ENCODE measurements at regions of chr17 and their contacts with region 1.

Region 1: DNA sequence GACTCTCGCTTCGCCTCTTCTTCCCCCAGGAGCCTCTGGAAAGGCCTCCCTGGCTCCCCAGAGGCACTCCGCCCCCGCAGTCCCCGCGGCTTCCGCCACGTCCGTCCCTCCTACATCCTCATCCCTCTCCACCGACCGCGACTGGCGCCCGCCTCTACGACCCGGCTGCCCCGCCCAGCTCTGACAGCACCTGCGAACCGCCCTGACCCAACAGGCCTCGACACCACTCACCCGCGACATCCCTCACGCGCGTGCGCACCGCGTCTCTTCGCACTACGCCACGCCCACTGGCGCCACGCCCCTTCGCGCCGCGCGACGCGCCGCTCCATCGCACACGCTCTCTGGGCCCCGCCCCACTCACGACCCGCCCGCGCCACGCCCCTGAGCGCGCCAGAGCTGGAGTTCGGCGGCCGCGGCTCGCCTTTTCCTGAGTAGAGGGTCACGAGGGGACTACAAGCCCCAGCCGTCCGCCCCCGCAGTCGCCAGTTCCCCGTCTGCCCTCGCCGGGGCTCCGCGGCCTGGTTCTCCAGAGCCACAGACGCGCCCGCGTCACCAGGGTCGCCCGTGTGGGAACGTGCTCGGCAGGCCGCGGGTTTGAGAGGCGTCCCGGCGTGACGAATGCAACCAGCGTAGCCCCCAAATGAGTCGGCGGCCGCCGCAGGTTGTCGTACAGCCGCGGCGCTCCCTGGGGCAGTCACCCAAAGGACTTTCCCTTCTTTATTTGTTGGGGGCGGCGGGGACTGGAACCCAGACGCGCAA is 56.2 kb upstream of the LRRC37A3 start:
- DNase-seq: peak; percentile 95 to 98 (median 97)
- H3K4me3 ChIP-seq: peak overlapping the region in 2 of 4 donors; percentile 51 to 79
- H3K27ac ChIP-seq: peak overlapping the region; percentile 89 to 99 (median 99)
- H3K4me1 ChIP-seq: peaks cover 14 to 19% of the 10 kb centered on the region in 2 donors
- H3K27me3 ChIP-seq: no peaks in the 10 kb centered on the region
- CTCF ChIP-seq: peak in 1 of 6 experiments; percentile 12
- POLR2A ChIP-seq: peak; percentile 77 to 95

Region 2: DNA sequence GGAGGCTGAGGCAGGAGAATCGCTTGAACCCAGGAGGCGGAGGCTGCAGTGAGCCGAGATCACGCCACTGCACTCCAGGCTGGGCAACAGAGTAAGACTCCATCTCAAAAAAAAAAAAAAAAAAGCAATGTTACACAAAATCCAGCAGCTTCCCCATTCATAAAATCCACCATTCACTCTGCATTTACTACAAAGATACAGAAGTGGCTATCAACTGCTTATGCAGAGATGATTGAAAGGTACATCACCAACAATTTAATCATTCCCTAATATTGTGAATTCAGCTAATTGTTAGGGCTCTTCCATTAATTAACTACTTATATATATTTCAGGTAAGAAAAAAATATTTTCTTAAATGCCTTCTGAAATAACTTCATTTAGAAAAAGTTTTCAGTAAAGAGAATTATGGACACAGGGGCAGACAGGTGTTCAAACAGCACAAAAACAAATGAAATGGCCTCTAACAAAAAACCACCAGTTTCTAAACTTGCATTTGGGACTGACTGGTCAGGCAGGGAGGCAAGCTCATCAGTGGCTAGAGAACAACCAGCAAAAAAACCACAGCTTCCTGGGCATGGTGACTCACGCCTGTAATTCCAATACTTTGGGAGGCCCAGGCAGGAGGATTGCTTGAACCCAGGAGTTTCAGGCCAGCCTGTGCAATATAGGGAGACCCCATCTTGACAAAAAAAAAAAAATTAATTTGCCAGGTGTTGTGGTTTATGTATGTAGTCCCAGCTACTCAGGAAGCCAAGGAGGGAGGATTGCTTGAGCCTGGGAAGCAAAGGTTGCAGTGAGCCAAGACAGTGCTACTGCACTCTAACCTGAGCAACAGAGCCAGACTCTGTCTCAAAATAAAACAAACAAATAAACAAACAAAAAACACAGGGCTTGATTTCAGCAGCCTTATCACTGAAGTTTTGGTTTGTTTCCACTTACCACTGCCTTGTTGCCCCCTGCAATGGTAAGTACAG is 871.8 kb before region 1 on chr17:
- intact Hi-C with region 1: no loop called
- DNase-seq: no peak
- H3K4me3 ChIP-seq: no peak overlapping the region
- H3K27ac ChIP-seq: peak overlapping the region in 3 of 5 donors; percentile 49 to 74 (median 62)
- H3K4me1 ChIP-seq: peaks cover 52 to 73% of the 10 kb centered on the region in 2 donors
- H3K27me3 ChIP-seq: no peaks in the 10 kb centered on the region
- CTCF ChIP-seq: no peak
- POLR2A ChIP-seq: no peak

Region 3: DNA sequence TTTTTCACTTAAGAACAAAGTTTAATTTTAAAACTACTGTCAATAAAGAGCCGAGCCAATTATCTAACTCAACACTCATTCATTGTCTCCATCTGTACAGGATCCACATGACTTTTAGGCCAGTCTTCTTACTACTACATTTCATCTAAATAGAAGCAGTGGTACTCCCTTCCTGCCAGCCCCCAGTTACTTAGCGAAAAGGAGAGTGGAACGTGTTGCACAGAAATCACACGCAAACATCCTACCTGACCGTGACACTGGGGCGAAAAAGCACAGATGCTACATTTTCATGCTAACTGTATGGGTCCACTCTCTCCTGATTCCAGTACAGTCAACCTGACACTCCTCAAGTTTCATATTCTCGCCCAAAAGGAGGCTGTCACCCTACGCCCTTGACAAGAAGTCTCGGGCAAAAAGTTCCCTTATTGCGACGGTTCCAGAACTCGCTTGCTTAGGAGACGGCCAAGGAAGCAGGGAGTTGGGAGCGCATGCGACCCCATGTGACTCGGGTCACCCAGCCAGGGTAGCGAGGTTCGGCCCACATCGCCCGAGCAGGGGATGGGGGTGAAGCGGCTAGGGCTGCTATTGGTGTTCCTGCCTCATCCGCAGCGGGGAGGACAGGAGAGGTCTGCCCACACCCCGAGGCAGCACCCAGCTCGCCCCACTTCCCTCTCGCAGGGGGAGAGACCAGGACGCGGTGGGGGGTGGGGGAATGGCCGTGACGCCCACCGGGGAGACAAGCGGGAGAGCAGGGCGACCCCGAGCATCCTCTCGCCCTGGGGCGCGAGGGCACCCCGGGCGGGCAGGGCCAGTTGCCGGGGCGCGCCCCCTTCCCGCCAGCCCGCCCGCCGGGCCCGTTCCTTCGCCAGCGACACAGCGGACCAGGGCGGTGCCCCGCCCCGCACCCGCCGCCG is 80.1 kb after region 1 on chr17:
- intact Hi-C with region 1: loop called (anchors 5 to 10 kb)
- DNase-seq: peak; percentile 76 to 87 (median 81)
- H3K4me3 ChIP-seq: peak overlapping the region; percentile 9 to 99 (median 78)
- H3K27ac ChIP-seq: peak overlapping the region; percentile 61 to 100 (median 98)
- H3K4me1 ChIP-seq: peaks cover 10 to 54% of the 10 kb centered on the region in 2 donors
- H3K27me3 ChIP-seq: no peaks in the 10 kb centered on the region
- CTCF ChIP-seq: no peak
- POLR2A ChIP-seq: peak; percentile 47 to 68

Measured in adrenal gland (tissue), 19 donors.